ENCODE measurements at regions of chr2 and their contacts with region 1.

Region 1: GRCh38 chr2:197944416-197945096 is 140.2 kb downstream of the PLCL1 start:
- DNase-seq: no peak
- ATAC-seq: no peak
- H3K4me3 ChIP-seq: no peak overlapping the region
- H3K27ac ChIP-seq: no peak overlapping the region
- H3K4me1 ChIP-seq: no peaks in the 10 kb centered on the region
- H3K27me3 ChIP-seq: peaks cover 55% of the 10 kb centered on the region
- CTCF ChIP-seq: no peak
- POLR2A ChIP-seq: no peak
- RAD21 ChIP-seq: no peak

Region 2: GRCh38 chr2:197927994-197928393 is 16.6 kb before region 1 on chr2:
- CTCF ChIA-PET with region 1: no interaction called
- POLR2A ChIA-PET with region 1: no interaction called
- RAD21 ChIA-PET with region 1: no interaction called
- intact Hi-C with region 1: loop called (anchors 1 kb)
- DNase-seq: no peak
- ATAC-seq: no peak
- H3K4me3 ChIP-seq: no peak overlapping the region
- H3K27ac ChIP-seq: no peak overlapping the region
- H3K4me1 ChIP-seq: no peaks in the 10 kb centered on the region
- H3K27me3 ChIP-seq: no peaks in the 10 kb centered on the region; the same call in 1 of the 2 replicates
- CTCF ChIP-seq: no peak
- POLR2A ChIP-seq: no peak
- RAD21 ChIP-seq: no peak